Activated B cell treated with CpG ODN at 0.5 μM for 24 hours (primary cell): ENCODE measurements at regions of chr1 and their contacts with region 1.

Region 1: GRCh38 chr1:202968840-202969295 is 1.8 kb upstream of the CYB5R1 start:
- DNase-seq: peak; percentile 30
- ATAC-seq: peak; percentile 65
- H3K4me3 Mint-ChIP-seq: peak overlapping the region; percentile 89
- H3K27ac Mint-ChIP-seq: peak overlapping the region; percentile 88
- H3K4me1 Mint-ChIP-seq: peaks cover 45% of the 10 kb centered on the region
- H3K27me3 Mint-ChIP-seq: no peaks in the 10 kb centered on the region
- CTCF ChIP-seq: no peak

Region 2: DNA sequence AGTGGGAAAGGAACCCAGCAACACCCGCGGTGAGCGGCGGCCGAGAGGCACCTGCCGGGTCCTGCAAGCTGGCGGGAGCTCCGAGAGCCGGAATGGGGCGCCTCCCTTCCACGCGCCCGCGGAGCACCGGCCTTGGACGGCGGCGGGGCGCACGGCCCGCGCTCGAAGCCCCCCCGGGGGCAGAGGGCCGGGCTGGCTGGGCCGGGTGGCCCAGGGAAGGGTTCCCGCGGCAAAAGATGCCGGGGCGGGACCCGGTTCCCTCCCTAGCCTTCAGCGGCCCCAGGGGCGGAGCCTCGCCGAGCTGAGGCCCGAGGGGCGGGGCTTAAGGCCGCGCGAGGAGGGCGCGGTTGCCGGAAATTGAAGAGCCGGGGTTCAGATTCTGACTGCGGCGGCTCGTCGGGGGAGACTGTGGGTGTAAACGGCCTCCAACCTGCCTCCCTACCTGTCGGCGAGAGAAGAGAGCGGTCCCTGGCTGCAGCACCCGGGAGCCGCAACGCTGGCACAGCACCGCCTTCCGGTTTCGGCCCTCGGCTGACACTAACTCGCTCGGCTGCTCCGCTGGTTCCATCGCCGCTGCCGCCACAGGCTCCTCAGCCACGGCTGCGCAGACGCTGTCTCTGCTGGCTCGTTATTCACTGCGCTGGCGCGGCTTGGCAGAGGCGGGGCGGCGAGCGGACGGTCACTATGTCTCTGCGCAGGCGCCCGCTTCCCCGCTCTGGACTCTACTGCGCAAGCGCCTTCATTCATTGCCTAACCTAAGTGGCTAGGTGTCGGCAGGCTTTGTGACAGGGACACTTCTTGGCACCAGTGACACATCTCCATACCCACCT is 80.1 kb before region 1 on chr1 and contains the start of gene RABIF:
- CTCF ChIA-PET with region 1: interaction called, 3 read pairs
- POLR2A ChIA-PET with region 1: interaction called, 10 read pairs
- intact Hi-C with region 1: loop called (anchors 1 kb)
- DNase-seq: peak; percentile 94
- ATAC-seq: peak; percentile 92
- H3K4me3 Mint-ChIP-seq: peak within 1 kb of the TSS; percentile 96
- H3K27ac Mint-ChIP-seq: peak within 1 kb of the TSS; percentile 98
- H3K4me1 Mint-ChIP-seq: peaks cover 16% of the 10 kb centered on the region
- H3K27me3 Mint-ChIP-seq: no peaks in the 10 kb centered on the region
- CTCF ChIP-seq: no peak
- total RNA-seq, gene RABIF: 10.7 and 13.2 TPM in 2 replicates

Region 3: DNA sequence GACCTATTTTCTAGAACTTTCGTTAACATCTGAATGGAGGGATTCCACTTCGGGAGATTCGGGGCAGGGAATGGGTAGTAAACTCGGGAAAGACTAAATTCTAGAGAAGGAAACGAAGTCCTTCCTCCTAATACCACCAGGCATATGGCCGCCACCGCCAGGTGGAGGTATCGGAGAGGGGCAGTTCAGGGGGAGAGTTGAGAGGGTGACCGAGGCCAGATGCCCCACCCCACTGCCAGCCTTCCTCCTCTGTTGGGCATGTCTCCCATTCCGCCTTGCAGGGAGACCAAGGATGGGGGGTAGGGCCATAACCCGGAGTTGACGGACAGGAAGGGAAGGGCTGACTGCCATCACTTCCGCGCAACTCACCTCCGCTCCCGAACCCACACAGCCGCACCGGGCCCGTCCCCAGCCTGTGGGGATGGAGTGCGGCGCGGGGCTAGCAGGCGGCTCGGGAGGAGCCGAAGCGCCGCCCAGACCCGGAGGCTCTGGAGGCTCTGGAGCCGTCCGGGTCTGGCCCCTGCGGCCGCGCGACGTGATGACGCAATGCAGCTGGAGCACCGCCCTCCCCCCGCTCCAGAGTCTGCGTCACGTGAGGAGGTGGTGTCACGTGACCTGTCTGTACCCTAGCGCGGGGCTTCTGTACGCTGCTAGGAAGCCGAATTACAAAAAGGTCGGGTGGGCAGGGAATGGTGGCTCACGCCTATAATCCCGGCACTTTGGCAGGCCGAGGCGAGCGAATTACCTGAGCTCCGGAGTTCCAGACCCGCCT is 42.0 kb before region 1 on chr1 and contains the start of gene KLHL12:
- CTCF ChIA-PET with region 1: interaction called, 3 read pairs
- POLR2A ChIA-PET with region 1: interaction called, 7 read pairs
- intact Hi-C with region 1: loop called (anchors 1 kb)
- DNase-seq: peak; percentile 92
- ATAC-seq: peak; percentile 93
- H3K4me3 Mint-ChIP-seq: peak within 1 kb of the TSS; percentile 94
- H3K27ac Mint-ChIP-seq: peak within 1 kb of the TSS; percentile 92
- H3K4me1 Mint-ChIP-seq: peaks cover 24% of the 10 kb centered on the region
- H3K27me3 Mint-ChIP-seq: no peaks in the 10 kb centered on the region
- CTCF ChIP-seq: no peak
- total RNA-seq, gene KLHL12: 30.4 and 30.8 TPM in 2 replicates

Region 4: GRCh38 chr1:202957733-202958543 is 10.9 kb before region 1 on chr1 and contains the start of gene ADIPOR1:
- CTCF ChIA-PET with region 1: no interaction called
- POLR2A ChIA-PET with region 1: interaction called, 8 read pairs
- intact Hi-C with region 1: loop called (anchors 1 kb)
- DNase-seq: peak; percentile 92
- ATAC-seq: peak; percentile 99
- H3K4me3 Mint-ChIP-seq: peak within 1 kb of the TSS; percentile 90
- H3K27ac Mint-ChIP-seq: peak within 1 kb of the TSS; percentile 86
- H3K4me1 Mint-ChIP-seq: peaks cover 34% of the 10 kb centered on the region
- H3K27me3 Mint-ChIP-seq: no peaks in the 10 kb centered on the region
- CTCF ChIP-seq: no peak
- total RNA-seq, gene ADIPOR1: 44.4 and 45.0 TPM in 2 replicates

Region 5: DNA sequence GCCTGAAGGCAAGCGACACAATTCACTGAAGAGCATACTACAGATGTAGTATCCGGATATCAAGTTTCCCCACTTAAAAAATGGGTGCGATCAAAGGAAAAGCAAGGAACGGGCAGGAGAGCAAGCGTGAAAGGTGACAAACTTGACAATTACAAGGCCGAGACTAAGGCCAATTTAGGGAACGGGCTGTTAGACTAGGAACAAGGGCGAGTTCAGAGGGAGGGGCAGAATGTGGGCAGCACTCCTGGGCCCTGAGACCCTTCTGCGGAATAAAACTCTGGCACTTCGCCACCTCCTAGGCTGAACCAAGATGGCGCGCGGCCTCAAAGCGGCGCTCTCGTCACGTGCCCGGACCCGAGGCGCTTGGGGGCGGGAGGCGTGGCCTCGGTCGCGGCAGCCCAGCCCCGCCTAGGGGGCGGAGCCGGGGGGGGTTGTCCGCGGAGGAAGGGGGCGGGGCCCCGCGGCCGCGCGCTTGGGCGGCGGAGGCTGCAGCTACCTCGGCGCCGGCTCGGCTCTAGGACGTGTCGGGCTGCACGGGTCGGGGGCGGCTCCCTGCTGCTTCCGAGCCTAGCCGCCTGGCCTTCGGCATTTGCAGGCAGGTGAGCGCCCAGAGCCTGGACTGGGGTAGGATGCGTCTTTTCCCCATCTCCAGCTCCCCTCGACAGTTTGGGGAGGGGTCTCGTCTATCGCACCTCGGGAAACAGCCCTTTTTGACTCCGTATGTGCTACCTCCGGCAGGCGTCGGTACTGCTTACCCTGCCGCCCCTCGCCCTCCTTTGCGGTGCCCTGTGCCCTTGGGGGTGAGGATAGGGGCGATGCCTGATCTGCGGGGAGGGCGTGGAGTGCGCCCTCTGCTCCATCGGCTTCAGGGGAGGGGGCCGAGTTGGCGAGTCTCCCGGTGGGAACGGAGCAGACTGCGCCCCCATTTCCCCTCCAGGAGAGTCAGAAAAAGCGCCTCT is 57.4 kb after region 1 on chr1 and contains the start of gene PPFIA4:
- CTCF ChIA-PET with region 1: no interaction called
- POLR2A ChIA-PET with region 1: no interaction called
- intact Hi-C with region 1: loop called (anchors 1 kb)
- DNase-seq: peak; percentile 87
- ATAC-seq: peak; percentile 97
- H3K4me3 Mint-ChIP-seq: peak within 1 kb of the TSS; percentile 73
- H3K27ac Mint-ChIP-seq: peak within 1 kb of the TSS; percentile 72
- H3K4me1 Mint-ChIP-seq: peaks cover 16% of the 10 kb centered on the region
- H3K27me3 Mint-ChIP-seq: peaks cover 3% of the 10 kb centered on the region
- CTCF ChIP-seq: no peak
- total RNA-seq, gene PPFIA4: 0.12 and 0.29 TPM in 2 replicates

Region 6: DNA sequence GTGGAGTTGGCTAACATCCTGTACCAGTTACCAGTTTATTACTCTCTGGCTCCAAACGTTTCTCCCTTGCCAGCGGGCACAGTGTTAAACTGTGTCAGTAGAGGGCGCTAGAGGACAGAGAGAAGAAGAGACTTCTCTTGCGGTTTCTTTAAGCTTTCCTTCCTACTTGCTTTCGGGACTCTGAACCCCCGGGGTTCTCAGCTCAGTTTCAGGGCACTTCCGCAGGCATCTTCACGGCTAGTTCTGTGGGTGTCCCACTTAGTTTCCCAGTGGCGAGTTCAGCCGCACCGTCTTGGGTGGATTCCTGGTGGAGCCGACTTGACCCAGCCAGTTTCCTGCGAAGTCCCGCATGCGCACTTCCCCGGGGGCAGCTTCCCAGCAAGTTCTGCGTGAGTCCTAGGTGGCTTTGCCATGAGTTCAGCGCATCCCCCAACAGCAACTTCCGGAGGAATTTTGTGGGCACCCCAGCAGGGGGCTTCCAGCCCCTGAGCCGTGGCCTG is 298.5 kb after region 1 on chr1:
- CTCF ChIA-PET with region 1: no interaction called
- POLR2A ChIA-PET with region 1: no interaction called
- intact Hi-C with region 1: no loop called
- DNase-seq: peak; percentile 62
- ATAC-seq: peak; percentile 59
- H3K4me3 Mint-ChIP-seq: peak overlapping the region; percentile 94
- H3K27ac Mint-ChIP-seq: peak overlapping the region; percentile 87
- H3K4me1 Mint-ChIP-seq: peaks cover 43% of the 10 kb centered on the region
- H3K27me3 Mint-ChIP-seq: no peaks in the 10 kb centered on the region
- CTCF ChIP-seq: peak; percentile 64

Region 7: DNA sequence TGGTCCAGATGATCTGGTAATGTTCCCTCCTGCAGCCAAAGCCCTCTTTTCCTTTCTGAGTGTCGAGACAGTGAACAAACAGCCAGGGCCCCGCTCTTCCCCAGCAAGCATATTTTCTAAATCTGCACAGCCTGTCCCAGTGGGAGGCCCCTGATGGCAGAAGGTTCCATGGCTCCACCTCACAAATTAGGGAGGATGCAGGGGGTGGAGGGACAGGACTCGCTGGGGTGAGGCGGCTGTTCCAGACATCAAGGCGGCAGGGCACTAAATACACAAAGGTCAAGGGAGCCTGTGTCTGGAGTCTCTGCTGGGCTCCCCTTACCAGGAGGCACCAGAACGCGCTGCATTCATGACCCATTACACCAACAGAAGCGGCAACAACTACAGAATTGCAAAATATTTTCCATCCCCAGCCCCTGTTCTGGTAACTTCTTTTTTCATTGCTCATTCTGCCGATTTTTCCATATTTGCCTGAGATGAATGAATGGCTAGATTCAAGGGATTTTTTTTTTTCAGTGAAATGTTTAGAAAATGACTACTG is 479.7 kb after region 1 on chr1:
- CTCF ChIA-PET with region 1: no interaction called
- POLR2A ChIA-PET with region 1: no interaction called
- intact Hi-C with region 1: no loop called
- DNase-seq: no peak
- ATAC-seq: no peak
- H3K4me3 Mint-ChIP-seq: no peak overlapping the region
- H3K27ac Mint-ChIP-seq: no peak overlapping the region
- H3K4me1 Mint-ChIP-seq: peaks cover 11% of the 10 kb centered on the region
- H3K27me3 Mint-ChIP-seq: peaks cover 6% of the 10 kb centered on the region
- CTCF ChIP-seq: no peak

Region 8: GRCh38 chr1:203861379-203862184 is 892.7 kb after region 1 on chr1 and contains the start of gene SNRPE:
- CTCF ChIA-PET with region 1: no interaction called
- POLR2A ChIA-PET with region 1: no interaction called
- intact Hi-C with region 1: loop called (anchors 5 kb)
- DNase-seq: peak; percentile 92
- ATAC-seq: peak; percentile 98
- H3K4me3 Mint-ChIP-seq: peak within 1 kb of the TSS; percentile 97
- H3K27ac Mint-ChIP-seq: peak within 1 kb of the TSS; percentile 98
- H3K4me1 Mint-ChIP-seq: peaks cover 24% of the 10 kb centered on the region
- H3K27me3 Mint-ChIP-seq: no peaks in the 10 kb centered on the region
- CTCF ChIP-seq: no peak
- total RNA-seq, gene SNRPE: 149 and 156 TPM in 2 replicates